ENCODE measurements at regions of chr1 and their contacts with region 1.

Region 1: GRCh38 chr1:999725-1000356 is at the start of gene HES4:
- DNase-seq: peak; percentile 95 to 96 (median 96)
- ATAC-seq: peak; percentile 66 to 84 (median 81)
- H3K4me3 ChIP-seq: peak within 1 kb of the TSS; percentile 51 to 93 (median 79)
- H3K27ac ChIP-seq: peak within 1 kb of the TSS; percentile 96 to 100 (median 100)
- H3K4me1 ChIP-seq: peaks cover 0 to 51% (median 28%) of the 10 kb centered on the region in 12 donors
- H3K27me3 ChIP-seq: peaks cover 0 to 69% (median 0%) of the 10 kb centered on the region in 9 donors
- CTCF ChIP-seq: no peak
- POLR2A ChIP-seq: peak; percentile 85 to 98
- total RNA-seq, gene HES4: 26.8 to 98.1 (median 42.0) TPM

Region 2: GRCh38 chr1:904310-904950 is 95.4 kb before region 1 on chr1:
- intact Hi-C with region 1: loop called in 1 of 10 experiments (anchors 5 kb)
- DNase-seq: peak; percentile 68 to 91 (median 78)
- ATAC-seq: peak in 3 of 4 donors; percentile 72 to 86 (median 81)
- H3K4me3 ChIP-seq: peak overlapping the region in 11 of 12 donors; percentile 4 to 57 (median 45)
- H3K27ac ChIP-seq: peak overlapping the region in 2 of 12 donors; percentile 35 to 53
- H3K4me1 ChIP-seq: peaks cover 0 to 28% (median 11%) of the 10 kb centered on the region in 12 donors
- H3K27me3 ChIP-seq: peaks cover 0 to 18% (median 5%) of the 10 kb centered on the region in 9 donors
- CTCF ChIP-seq: peak; percentile 78 to 98 (median 92)
- POLR2A ChIP-seq: no peak

Region 3: DNA sequence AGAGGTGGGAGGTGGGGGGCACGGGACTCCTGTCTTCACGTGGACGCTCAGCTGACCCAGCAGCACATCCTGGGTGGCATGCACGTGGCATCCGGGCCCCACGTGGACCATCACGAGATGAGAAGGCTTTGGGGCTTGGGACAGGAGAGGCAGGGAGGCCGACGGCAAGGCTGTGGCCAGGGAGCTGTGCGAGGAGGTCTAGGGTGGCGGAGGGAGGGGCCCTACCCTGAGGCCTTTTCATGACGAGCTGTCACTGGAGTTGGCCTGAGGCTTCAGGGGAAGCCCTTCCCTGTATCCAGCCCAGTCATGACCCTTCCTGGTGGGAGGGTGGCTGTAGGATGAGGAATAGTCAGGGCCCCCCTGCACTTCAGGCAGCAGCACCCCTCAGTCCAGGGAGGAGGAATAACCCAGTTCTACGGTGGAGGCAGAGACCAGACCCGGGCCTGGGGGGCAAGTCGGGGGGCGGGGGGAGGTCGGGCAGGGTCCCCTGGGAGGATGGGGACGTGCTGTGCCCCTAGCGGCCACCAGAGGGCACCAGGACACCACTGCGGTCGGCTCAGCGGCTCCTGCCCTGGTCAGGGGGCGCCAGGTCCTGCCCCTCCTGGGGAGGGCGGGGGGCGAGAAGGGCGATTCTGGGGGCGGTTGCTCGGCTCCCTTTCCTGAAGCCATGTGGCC is 15.9 kb before region 1 on chr1:
- intact Hi-C with region 1: loop called in 1 of 10 experiments (anchors 2 kb)
- DNase-seq: peak; percentile 44 to 75 (median 60)
- ATAC-seq: no peak
- H3K4me3 ChIP-seq: peak overlapping the region in 6 of 12 donors; percentile 10 to 45 (median 28)
- H3K27ac ChIP-seq: peak overlapping the region in 3 of 12 donors; percentile 13 to 98 (median 19)
- H3K4me1 ChIP-seq: peaks cover 0 to 34% (median 2%) of the 10 kb centered on the region in 12 donors
- H3K27me3 ChIP-seq: peaks cover 0 to 12% (median 0%) of the 10 kb centered on the region in 9 donors
- CTCF ChIP-seq: peak; percentile 87 to 98 (median 92)
- POLR2A ChIP-seq: no peak

Region 4: DNA sequence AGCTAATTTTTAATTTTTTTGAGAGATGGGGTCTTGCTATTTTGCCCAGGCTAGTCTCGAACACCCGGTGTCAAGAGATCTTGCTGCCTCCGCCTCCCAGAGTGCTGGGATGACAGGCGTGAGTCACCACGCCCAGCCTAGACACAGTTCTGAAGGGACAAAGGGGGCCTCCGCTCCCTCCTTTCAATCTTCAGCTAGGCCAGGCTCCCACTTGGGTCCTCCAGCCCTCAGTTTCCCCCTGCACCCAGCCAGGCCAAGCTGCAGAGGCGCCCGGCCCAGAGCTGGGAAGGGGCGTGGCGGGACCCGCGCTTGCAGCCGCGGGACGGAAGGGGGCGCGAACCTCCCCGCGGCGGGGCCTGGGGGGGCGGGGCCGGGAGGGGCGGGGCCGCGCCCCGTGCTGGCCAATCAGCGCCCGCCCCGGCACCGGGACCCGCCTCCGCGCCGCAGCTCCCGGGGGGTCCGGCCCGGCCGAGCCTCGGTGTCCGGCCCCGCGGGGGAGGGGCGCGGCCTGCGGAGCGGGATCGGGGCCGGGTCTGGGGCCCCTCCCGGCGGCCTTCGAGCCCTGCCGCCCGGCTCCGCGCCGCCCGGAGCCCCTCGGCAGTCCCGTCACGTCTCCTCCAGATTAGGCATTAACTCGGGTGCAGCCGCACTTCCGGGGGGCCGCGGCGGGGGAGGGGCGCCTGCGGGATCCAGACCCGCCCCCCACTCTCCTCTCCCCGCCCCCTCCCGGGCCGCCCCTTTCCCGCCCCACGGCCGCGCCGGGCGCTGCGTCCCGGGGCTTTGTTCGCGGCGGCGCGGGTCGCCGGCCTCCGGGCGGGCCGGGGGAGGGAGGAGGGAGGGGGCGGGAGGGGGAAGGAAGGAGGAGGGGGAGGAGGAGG is 19.5 kb after region 1 on chr1:
- intact Hi-C with region 1: loop called in 1 of 10 experiments (anchors 2 kb)
- DNase-seq: peak; percentile 86 to 93 (median 88)
- ATAC-seq: peak; percentile 51 to 91 (median 86)
- H3K4me3 ChIP-seq: peak overlapping the region; percentile 59 to 99 (median 81)
- H3K27ac ChIP-seq: peak overlapping the region; percentile 88 to 99 (median 96)
- H3K4me1 ChIP-seq: peaks cover 2 to 43% (median 34%) of the 10 kb centered on the region in 12 donors
- H3K27me3 ChIP-seq: peaks cover 0 to 10% (median 0%) of the 10 kb centered on the region in 9 donors
- CTCF ChIP-seq: peak in 11 of 12 donors; percentile 36 to 66 (median 55)
- POLR2A ChIP-seq: no peak

Region 5: GRCh38 chr1:1091663-1092478 is 92.0 kb after region 1 on chr1:
- intact Hi-C with region 1: no loop called
- DNase-seq: peak in 2 of 5 donors; percentile 16 to 67
- ATAC-seq: peak in 1 of 4 donors; percentile 2
- H3K4me3 ChIP-seq: no peak overlapping the region
- H3K27ac ChIP-seq: no peak overlapping the region
- H3K4me1 ChIP-seq: no peaks in the 10 kb centered on the region
- H3K27me3 ChIP-seq: no peaks in the 10 kb centered on the region
- CTCF ChIP-seq: no peak
- POLR2A ChIP-seq: no peak